ENCODE measurements at regions of chrX and their contacts with region 1.

Region 1: DNA sequence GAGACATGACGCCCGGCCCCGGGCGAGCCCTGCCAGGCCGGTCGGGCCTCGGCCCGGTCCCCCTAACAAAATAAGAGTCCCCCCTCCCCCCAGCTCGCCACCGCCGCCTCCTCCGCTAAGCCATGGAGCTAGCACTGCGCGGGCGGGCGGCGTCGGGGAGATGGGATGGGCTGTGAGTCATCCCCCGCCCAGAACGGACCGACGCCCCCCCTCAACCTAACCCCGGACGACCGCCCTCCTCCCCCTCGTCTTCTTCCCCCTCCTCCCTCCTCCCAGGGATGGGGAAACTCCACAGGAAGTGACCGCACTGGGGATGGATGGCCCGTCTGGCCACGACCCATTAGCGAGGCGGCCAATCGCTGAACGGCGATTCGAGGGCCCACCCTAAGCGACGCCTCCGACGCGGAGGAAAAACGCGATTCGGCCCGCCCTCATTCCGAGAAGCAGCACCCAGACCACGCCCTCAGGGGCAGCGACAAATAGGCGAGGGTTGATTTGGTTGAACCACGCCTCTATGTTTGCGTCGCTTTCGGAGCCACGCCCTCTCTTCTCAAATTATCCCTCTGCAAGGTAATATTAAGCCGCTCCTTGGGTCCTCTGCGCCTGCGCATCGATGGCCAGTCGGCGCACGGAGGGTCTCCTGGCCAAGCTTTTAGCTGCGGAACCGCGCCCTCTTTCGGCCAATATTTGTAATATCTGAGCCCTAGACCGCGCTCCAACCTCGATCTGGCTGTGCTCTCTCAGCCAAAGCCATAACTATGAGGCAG is at the start of gene TFE3:
- DNase-seq: peak; percentile 77 to 96 (median 91)
- ATAC-seq: peak; percentile 93
- H3K4me3 ChIP-seq: peak within 1 kb of the TSS; percentile 54
- H3K4me3 Mint-ChIP-seq: peak within 1 kb of the TSS; percentile 78 to 95 (median 89)
- H3K27ac ChIP-seq: peak within 1 kb of the TSS; percentile 96
- H3K27ac Mint-ChIP-seq: peak within 1 kb of the TSS; percentile 80 to 96 (median 96)
- H3K4me1 ChIP-seq: peaks cover 5 to 21% of the 10 kb centered on the region in 2 donors
- H3K4me1 Mint-ChIP-seq: peaks cover 18 to 40% (median 31%) of the 10 kb centered on the region in 7 donors
- H3K27me3 ChIP-seq: no peaks in the 10 kb centered on the region
- H3K27me3 Mint-ChIP-seq: no peaks in the 10 kb centered on the region
- total RNA-seq, gene TFE3: 26.2 to 54.2 (median 30.5) TPM

Region 2: GRCh38 chrX:48539345-48540027 is 503.9 kb before region 1 on chrX and contains the start of gene TBC1D25:
- CTCF ChIA-PET with region 1: no interaction called
- POLR2A ChIA-PET with region 1: no interaction called
- intact Hi-C with region 1: loop called in 1 of 2 experiments (anchors 1 kb)
- DNase-seq: peak; percentile 85 to 99 (median 95)
- ATAC-seq: peak; percentile 92
- H3K4me3 ChIP-seq: peak within 1 kb of the TSS; percentile 75
- H3K4me3 Mint-ChIP-seq: peak within 1 kb of the TSS; percentile 80 to 98 (median 90)
- H3K27ac ChIP-seq: peak within 1 kb of the TSS; percentile 91
- H3K27ac Mint-ChIP-seq: peak within 1 kb of the TSS; percentile 90 to 99 (median 96)
- H3K4me1 ChIP-seq: peaks cover 8 to 10% of the 10 kb centered on the region in 2 donors
- H3K4me1 Mint-ChIP-seq: peaks cover 14 to 18% (median 16%) of the 10 kb centered on the region in 7 donors
- H3K27me3 ChIP-seq: no peaks in the 10 kb centered on the region
- H3K27me3 Mint-ChIP-seq: no peaks in the 10 kb centered on the region
- total RNA-seq, gene TBC1D25: 20.2 to 31.2 (median 26.4) TPM

Region 3: GRCh38 chrX:48737213-48737938 is 306.0 kb before region 1 on chrX:
- CTCF ChIA-PET with region 1: no interaction called
- POLR2A ChIA-PET with region 1: no interaction called
- intact Hi-C with region 1: loop called in 1 of 2 experiments (anchors 1 kb)
- DNase-seq: peak; percentile 55 to 94 (median 89)
- ATAC-seq: peak; percentile 98
- H3K4me3 ChIP-seq: peak overlapping the region; percentile 81
- H3K4me3 Mint-ChIP-seq: peak overlapping the region; percentile 79 to 98 (median 94)
- H3K27ac ChIP-seq: peak overlapping the region; percentile 91
- H3K27ac Mint-ChIP-seq: peak overlapping the region; percentile 90 to 99 (median 96)
- H3K4me1 ChIP-seq: peaks cover 12 to 14% of the 10 kb centered on the region in 2 donors
- H3K4me1 Mint-ChIP-seq: peaks cover 8 to 31% (median 24%) of the 10 kb centered on the region in 7 donors
- H3K27me3 ChIP-seq: no peaks in the 10 kb centered on the region
- H3K27me3 Mint-ChIP-seq: no peaks in the 10 kb centered on the region

Region 4: GRCh38 chrX:48917139-48918001 is 126.0 kb before region 1 on chrX:
- CTCF ChIA-PET with region 1: no interaction called
- POLR2A ChIA-PET with region 1: interaction called, 7 read pairs
- intact Hi-C with region 1: loop called (anchors 1 kb)
- DNase-seq: peak; percentile 73 to 92 (median 88)
- ATAC-seq: peak; percentile 65
- H3K4me3 ChIP-seq: peak overlapping the region; percentile 75
- H3K4me3 Mint-ChIP-seq: peak overlapping the region; percentile 87 to 99 (median 96)
- H3K27ac ChIP-seq: peak overlapping the region; percentile 95
- H3K27ac Mint-ChIP-seq: peak overlapping the region; percentile 89 to 99 (median 96)
- H3K4me1 ChIP-seq: peaks cover 46 to 49% of the 10 kb centered on the region in 2 donors
- H3K4me1 Mint-ChIP-seq: peaks cover 11 to 82% (median 48%) of the 10 kb centered on the region in 7 donors
- H3K27me3 ChIP-seq: no peaks in the 10 kb centered on the region
- H3K27me3 Mint-ChIP-seq: peaks cover 0 to 5% (median 0%) of the 10 kb centered on the region in 5 donors

Region 5: DNA sequence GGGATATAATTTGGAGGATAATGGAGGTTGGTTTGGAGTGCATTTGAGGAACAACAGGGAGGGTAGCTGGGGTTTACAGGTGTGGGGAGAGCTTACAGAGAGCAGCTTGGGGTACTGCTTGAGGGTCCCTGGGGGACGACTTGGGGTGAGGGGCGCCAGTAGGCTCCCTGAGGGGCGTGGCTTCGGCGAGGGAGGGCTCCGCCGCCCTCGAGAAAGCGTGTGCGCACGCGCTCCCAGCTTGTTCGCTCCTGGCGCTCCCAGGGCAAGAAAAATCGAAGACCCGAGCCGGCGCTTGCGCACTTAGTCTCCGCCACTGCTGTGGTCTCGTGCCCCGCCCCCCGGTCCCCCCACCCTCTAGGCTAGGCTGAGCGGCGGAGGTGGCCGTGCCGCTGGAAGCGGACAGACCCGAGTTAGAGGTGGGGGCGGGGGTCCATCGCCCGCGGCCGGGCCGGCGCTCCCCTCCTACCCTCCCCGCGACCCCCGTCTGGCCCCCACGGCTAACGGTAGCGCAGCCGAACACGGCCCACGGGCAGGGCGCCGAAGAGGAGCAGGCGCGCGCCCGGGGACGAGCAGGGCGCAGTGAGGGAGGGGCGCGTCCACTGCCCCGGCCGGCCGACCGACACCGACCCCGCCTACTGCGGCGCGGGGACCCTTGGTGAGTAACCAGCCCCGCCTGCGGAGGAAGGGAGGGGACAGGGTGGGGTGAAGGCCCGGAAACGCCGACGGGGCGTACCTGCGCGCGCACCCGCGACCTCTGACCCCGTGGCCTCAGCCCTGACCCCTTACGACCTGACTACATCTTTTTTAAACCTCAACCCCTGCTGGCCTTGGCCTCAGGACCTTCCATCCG is 10.0 kb after region 1 on chrX:
- CTCF ChIA-PET with region 1: no interaction called
- POLR2A ChIA-PET with region 1: interaction called, 4 read pairs
- intact Hi-C with region 1: loop called (anchors 1 kb)
- DNase-seq: peak; percentile 22 to 60 (median 51)
- ATAC-seq: peak; percentile 91
- H3K4me3 ChIP-seq: peak overlapping the region; percentile 48
- H3K4me3 Mint-ChIP-seq: peak overlapping the region; percentile 76 to 92 (median 88)
- H3K27ac ChIP-seq: peak overlapping the region; percentile 92
- H3K27ac Mint-ChIP-seq: peak overlapping the region; percentile 86 to 96 (median 93)
- H3K4me1 ChIP-seq: peaks cover 8% of the 10 kb centered on the region in 2 donors
- H3K4me1 Mint-ChIP-seq: peaks cover 16 to 37% (median 30%) of the 10 kb centered on the region in 7 donors
- H3K27me3 ChIP-seq: no peaks in the 10 kb centered on the region
- H3K27me3 Mint-ChIP-seq: peaks cover 0 to 3% (median 0%) of the 10 kb centered on the region in 5 donors

Region 6: GRCh38 chrX:49120099-49120498 is 76.7 kb after region 1 on chrX:
- CTCF ChIA-PET with region 1: no interaction called
- POLR2A ChIA-PET with region 1: no interaction called
- intact Hi-C with region 1: no loop called
- DNase-seq: no peak
- ATAC-seq: no peak
- H3K4me3 ChIP-seq: no peak overlapping the region
- H3K4me3 Mint-ChIP-seq: peak overlapping the region in 3 of 10 donors; percentile 9 to 24 (median 12)
- H3K27ac ChIP-seq: no peak overlapping the region
- H3K27ac Mint-ChIP-seq: peak overlapping the region in 2 of 9 donors; percentile 12 to 30
- H3K4me1 ChIP-seq: peaks cover 16 to 18% of the 10 kb centered on the region in 2 donors
- H3K4me1 Mint-ChIP-seq: peaks cover 32 to 59% (median 37%) of the 10 kb centered on the region in 7 donors
- H3K27me3 ChIP-seq: no peaks in the 10 kb centered on the region
- H3K27me3 Mint-ChIP-seq: no peaks in the 10 kb centered on the region

Region 7: DNA sequence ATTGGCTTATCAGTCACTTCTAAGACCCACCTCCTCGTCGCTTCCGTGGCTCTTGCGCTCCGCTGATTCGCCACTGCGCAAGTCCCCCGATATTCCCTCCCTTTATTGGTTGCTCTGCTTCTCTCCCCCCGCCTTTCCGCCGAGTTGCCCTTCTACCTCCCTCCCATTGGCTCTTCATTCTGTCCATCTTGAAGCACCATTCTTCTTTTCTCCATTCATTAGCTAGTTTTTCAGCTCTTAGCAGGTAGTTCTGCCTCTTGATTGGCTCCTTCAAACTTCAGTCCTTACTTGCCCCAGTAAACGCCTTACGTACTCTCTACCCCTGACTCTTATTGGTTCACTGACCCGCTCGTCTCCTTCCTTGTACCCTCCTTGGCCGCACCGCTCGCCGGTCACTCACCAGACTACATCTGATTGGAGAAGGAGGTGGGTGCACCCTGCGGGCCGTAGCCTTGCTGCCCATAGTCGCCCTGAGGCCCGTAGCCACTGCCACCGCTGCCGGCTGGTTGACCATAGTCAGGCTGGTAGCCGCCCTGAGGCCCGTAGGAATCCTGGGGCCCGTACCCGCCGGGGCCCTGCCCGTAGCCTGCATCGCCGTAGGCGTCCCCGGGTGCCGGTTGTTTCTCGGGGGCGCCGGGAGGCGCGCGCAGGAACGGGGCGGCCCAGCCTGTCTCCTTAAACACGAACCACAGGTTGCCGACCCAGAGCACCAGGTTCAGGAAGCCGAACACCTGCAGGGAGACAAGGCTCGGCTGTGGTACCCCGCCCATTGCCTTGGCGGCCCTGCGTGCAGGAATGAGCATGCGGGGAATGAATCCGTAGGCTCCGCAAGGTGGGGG is 147.8 kb after region 1 on chrX:
- CTCF ChIA-PET with region 1: no interaction called
- POLR2A ChIA-PET with region 1: no interaction called
- intact Hi-C with region 1: loop called in 1 of 2 experiments (anchors 1 kb)
- DNase-seq: peak; percentile 43 to 95 (median 90)
- ATAC-seq: peak; percentile 92
- H3K4me3 ChIP-seq: peak overlapping the region; percentile 96
- H3K4me3 Mint-ChIP-seq: peak overlapping the region; percentile 86 to 95 (median 92)
- H3K27ac ChIP-seq: peak overlapping the region; percentile 82
- H3K27ac Mint-ChIP-seq: peak overlapping the region; percentile 77 to 98 (median 94)
- H3K4me1 ChIP-seq: peaks cover 0 to 15% of the 10 kb centered on the region in 2 donors
- H3K4me1 Mint-ChIP-seq: peaks cover 11 to 41% (median 26%) of the 10 kb centered on the region in 7 donors
- H3K27me3 ChIP-seq: no peaks in the 10 kb centered on the region
- H3K27me3 Mint-ChIP-seq: no peaks in the 10 kb centered on the region

Measured in naive thymus-derived CD4-positive, alpha-beta T cell (primary cell).